ENCODE measurements at regions of chr6 and their contacts with region 1.

Region 1: DNA sequence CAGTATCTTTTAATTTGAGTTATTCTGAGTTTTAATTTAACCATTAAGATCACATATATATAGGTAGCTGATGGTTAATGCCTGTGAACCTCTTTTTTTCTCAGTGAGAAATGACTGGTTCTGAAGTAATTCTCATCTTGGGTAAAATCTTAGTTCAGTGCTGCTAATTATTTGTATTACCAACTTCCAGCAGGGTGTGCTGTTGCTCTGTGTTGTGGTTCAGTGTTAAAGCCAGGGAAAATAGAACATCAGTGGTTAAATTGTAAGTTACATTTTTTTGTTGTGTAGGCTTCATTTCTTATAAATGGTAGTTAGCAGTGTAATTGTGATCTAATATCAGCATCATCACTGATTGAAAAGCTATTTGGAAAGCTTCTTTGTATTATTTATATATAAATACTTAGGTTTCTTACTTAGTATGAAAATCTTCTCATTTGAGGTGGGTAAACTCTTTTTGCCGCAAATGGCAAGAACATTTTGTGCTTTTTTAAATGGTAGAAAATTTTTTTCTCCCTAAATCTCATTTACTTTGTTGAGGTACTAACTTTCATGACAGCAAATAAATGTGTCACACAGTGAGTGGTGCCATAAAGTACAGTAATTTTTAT is 43.7 kb downstream of the CDC5L start:
- DNase-seq: peak; percentile 72
- ATAC-seq: peak; percentile 78
- H3K4me3 ChIP-seq: no peak overlapping the region
- H3K27ac ChIP-seq: no peak overlapping the region
- H3K4me1 ChIP-seq: no peaks in the 10 kb centered on the region
- H3K27me3 ChIP-seq: no peaks in the 10 kb centered on the region
- CTCF ChIP-seq: peak; percentile 86

Region 2: GRCh38 chr6:44133003-44133931 is 298.0 kb before region 1 on chr6:
- CTCF ChIA-PET with region 1: no interaction called
- POLR2A ChIA-PET with region 1: no interaction called
- intact Hi-C with region 1: no loop called
- DNase-seq: peak; percentile 60
- ATAC-seq: peak; percentile 73
- H3K4me3 ChIP-seq: no peak overlapping the region
- H3K27ac ChIP-seq: no peak overlapping the region
- H3K4me1 ChIP-seq: peaks cover 12% of the 10 kb centered on the region
- H3K27me3 ChIP-seq: no peaks in the 10 kb centered on the region
- CTCF ChIP-seq: no peak

Region 3: GRCh38 chr6:44456070-44456965 is 25.1 kb after region 1 on chr6:
- CTCF ChIA-PET with region 1: interaction called, 3 read pairs
- POLR2A ChIA-PET with region 1: no interaction called
- intact Hi-C with region 1: loop called (anchors 1 kb)
- DNase-seq: peak; percentile 73
- ATAC-seq: peak; percentile 69
- H3K4me3 ChIP-seq: peak overlapping the region; percentile 61
- H3K27ac ChIP-seq: peak overlapping the region; percentile 51
- H3K4me1 ChIP-seq: peaks cover 44% of the 10 kb centered on the region
- H3K27me3 ChIP-seq: no peaks in the 10 kb centered on the region
- CTCF ChIP-seq: peak; percentile 86

Region 4: GRCh38 chr6:44468835-44469234 is 37.6 kb after region 1 on chr6:
- CTCF ChIA-PET with region 1: interaction called, 4 read pairs
- POLR2A ChIA-PET with region 1: interaction called, 7 read pairs
- intact Hi-C with region 1: loop called (anchors 1 kb)
- DNase-seq: no peak
- ATAC-seq: no peak
- H3K4me3 ChIP-seq: no peak overlapping the region
- H3K27ac ChIP-seq: no peak overlapping the region
- H3K4me1 ChIP-seq: no peaks in the 10 kb centered on the region; the same call in 1 of the 2 replicates
- H3K27me3 ChIP-seq: no peaks in the 10 kb centered on the region
- CTCF ChIP-seq: no peak

Region 5: DNA sequence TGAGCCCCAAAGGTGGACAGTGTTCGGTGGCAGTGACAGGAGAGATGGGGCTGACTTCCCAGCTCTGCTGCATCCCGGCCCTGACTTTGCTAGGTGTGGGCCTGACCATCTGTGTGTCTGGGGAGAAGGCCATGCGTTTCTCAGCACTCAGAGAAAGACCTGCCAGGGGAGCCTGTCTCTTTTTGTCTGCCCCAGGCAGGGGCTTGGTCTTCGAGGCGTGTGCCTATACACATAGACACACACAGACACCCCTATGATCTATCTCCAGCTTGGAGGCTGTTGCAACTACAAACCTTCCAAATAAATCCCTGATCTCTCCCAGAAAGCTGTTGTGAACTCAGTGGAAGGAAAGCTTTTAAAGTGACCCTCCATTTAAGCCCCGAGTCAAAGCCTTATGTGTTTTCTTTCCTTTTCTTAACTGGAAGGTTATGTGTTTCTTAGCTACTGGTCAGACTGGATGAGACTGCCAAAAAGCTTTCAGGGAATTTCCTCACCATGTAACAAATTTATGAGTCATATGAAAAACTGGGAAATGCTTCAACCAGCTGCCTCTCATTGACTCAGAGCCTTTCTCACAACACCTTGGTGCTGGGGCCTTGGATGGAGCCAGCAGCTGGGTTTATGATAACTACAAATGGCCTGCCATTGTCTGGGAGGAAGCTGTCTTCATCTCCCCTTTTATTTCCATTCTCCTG is 58.8 kb after region 1 on chr6:
- CTCF ChIA-PET with region 1: interaction called, 10 read pairs
- POLR2A ChIA-PET with region 1: no interaction called
- intact Hi-C with region 1: no loop called
- DNase-seq: peak; percentile 96
- ATAC-seq: peak; percentile 73
- H3K4me3 ChIP-seq: peak overlapping the region; percentile 48
- H3K27ac ChIP-seq: peak overlapping the region; percentile 89
- H3K4me1 ChIP-seq: peaks cover 39% of the 10 kb centered on the region
- H3K27me3 ChIP-seq: no peaks in the 10 kb centered on the region
- CTCF ChIP-seq: no peak

Measured in PC-3 (cell line).